Right lobe of liver (tissue), 6 donors: ENCODE measurements at regions of chr13 and their contacts with region 1.

Region 1: DNA sequence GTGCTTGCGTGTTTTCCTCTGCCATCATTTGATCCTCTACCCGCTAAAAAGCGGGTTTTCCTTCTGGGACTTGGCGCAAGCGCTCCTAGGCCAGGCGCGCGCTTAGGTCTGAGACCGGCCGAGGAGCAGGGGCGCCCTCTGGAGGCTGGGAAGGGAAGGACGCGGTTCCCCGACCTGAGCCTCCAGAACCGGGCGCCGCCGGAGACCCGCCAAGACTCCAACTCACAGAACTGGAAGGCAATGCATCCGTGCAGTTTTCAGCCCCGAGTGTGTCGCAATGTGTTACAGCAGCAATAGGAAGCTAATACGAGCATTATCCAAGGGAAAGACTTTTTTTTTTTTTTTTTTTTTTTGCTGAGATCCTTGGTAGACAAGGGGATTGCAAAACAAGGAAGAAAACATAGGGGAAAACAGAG is 190.9 kb downstream of the COL4A1 start:
- DNase-seq: peak; percentile 71 to 79 (median 75)
- ATAC-seq: peak; percentile 96 to 98 (median 98)
- H3K4me3 ChIP-seq: no peak overlapping the region
- H3K27ac ChIP-seq: no peak overlapping the region
- H3K4me1 ChIP-seq: no peaks in the 10 kb centered on the region
- H3K27me3 ChIP-seq: peaks cover 4 to 9% of the 10 kb centered on the region in 2 donors
- CTCF ChIP-seq: peak; percentile 70 to 87 (median 76)
- POLR2A ChIP-seq: no peak

Region 2: DNA sequence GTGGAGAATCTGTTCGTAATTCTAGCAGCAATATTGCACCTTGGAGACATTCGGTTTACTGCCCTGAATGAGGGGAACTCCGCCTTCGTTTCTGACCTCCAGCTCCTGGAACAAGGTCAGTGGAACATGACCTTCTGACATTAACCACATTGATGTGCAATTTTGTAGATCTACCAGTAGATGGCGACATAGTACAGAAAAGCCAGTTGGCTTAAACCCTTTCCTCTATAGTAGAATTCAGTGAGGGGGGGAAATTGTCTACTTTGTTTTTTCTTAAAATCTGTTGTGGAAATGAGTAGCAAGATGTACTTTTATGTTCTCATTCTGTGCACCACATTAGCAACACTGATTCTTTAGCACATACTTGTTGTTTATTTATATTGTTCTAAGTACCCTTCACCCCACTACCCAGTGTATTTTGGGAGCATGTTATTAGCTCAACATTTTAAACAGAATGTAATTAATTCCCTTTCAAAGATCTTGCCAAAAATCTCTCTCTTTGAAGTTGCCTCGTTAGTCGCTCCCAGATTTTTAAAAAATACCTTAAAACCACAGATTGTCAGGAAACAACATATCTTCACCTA is 1154.4 kb before region 1 on chr13:
- intact Hi-C with region 1: loop called in 1 of 2 experiments (anchors 10 kb)
- DNase-seq: no peak
- ATAC-seq: peak; percentile 91 to 99 (median 96)
- H3K4me3 ChIP-seq: no peak overlapping the region
- H3K27ac ChIP-seq: no peak overlapping the region
- H3K4me1 ChIP-seq: no peaks in the 10 kb centered on the region
- H3K27me3 ChIP-seq: no peaks in the 10 kb centered on the region
- CTCF ChIP-seq: peak; percentile 86 to 91 (median 90)
- POLR2A ChIP-seq: no peak

Region 3: GRCh38 chr13:110062077-110062776 is 53.9 kb before region 1 on chr13:
- intact Hi-C with region 1: no loop called
- DNase-seq: peak; percentile 84 to 92 (median 89)
- ATAC-seq: peak; percentile 82 to 92 (median 91)
- H3K4me3 ChIP-seq: no peak overlapping the region
- H3K27ac ChIP-seq: peak overlapping the region; percentile 69 to 90 (median 78)
- H3K4me1 ChIP-seq: peaks cover 0 to 36% (median 18%) of the 10 kb centered on the region in 4 donors
- H3K27me3 ChIP-seq: no peaks in the 10 kb centered on the region
- CTCF ChIP-seq: no peak
- POLR2A ChIP-seq: peak; percentile 31

Region 4: DNA sequence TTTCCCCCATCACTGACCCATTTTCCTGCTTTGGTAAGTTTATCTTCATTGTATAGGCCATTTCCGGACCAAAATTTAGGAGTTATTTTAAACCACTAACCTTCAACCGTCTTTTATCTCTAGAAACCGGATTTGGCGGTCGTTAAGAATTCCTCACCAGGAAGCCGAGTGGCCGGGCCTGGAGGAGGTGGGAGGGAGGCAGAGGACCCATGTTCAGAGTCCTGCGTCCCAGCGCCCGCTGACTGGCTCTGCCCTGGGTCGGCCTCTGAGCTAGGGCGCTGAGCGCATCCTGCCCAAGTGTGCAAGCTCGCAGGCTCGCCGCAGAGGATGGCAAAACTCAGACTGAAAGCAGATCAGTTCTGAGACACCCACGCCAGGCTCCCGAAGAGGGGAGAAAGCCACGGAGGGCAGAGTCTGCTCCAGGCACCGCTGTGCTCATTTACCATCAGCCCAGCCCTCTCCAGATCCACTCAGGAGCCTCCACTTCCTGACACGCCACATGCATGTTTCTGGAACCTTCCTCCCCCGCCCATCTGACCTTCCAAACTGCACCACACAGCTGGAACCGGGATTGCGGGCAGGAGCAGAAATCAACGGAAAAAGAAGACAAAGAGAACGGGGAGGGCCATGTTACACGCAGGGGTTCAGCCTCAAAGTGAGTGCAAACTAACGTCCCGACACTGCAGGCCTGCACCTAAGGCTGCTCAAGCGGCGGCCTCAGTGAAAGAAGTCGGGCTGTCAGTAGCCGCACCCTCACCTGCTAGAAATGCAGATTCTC is 182.6 kb after region 1 on chr13:
- intact Hi-C with region 1: no loop called
- DNase-seq: peak in 1 of 3 donors; percentile 64
- ATAC-seq: peak; percentile 74 to 86 (median 76)
- H3K4me3 ChIP-seq: no peak overlapping the region
- H3K27ac ChIP-seq: peak overlapping the region in 2 of 3 donors; percentile 43 to 54
- H3K4me1 ChIP-seq: no peaks in the 10 kb centered on the region
- H3K27me3 ChIP-seq: no peaks in the 10 kb centered on the region
- CTCF ChIP-seq: no peak
- POLR2A ChIP-seq: no peak